Mammary epithelial cell (primary cell): ENCODE measurements at regions of chr17 and their contacts with region 1.

Region 1: GRCh38 chr17:66165513-66166123 is 26.3 kb downstream of the CEP112 start:
- DNase-seq: peak; percentile 33
- H3K4me3 ChIP-seq: no peak overlapping the region
- H3K27ac ChIP-seq: no peak overlapping the region
- H3K4me1 ChIP-seq: no peaks in the 10 kb centered on the region
- H3K27me3 ChIP-seq: no peaks in the 10 kb centered on the region
- CTCF ChIP-seq: peak; percentile 62 to 64

Region 2: GRCh38 chr17:65556014-65556909 is 609.4 kb before region 1 on chr17:
- CTCF ChIA-PET with region 1: no interaction called
- dilution Hi-C with region 1: no loop called
- in situ Hi-C with region 1: no loop called
- intact Hi-C with region 1: loop called (anchors 5 kb)
- DNase-seq: peak; percentile 24
- H3K4me3 ChIP-seq: no peak overlapping the region
- H3K27ac ChIP-seq: no peak overlapping the region
- H3K4me1 ChIP-seq: peaks cover 10% of the 10 kb centered on the region
- H3K27me3 ChIP-seq: peaks cover 21% of the 10 kb centered on the region
- CTCF ChIP-seq: peak; percentile 67

Region 3: DNA sequence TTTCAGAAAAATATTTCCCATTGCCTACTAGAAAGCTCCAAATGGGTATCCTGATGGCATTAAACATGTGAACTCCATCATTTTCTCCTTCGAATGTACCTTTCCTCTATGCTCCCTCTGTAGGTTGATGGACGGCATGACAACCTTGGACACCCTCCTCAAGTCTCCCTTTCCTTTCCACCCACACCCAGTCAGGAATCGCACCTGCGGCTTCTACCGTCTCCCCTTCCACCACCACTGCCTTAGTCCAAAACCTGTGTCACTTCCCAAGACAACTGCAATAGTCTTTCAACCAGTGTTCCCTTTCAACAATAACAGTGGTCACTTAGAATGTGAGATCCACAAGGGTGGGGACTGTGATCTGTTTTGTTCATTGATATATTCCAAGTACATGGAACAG is 371.0 kb before region 1 on chr17:
- CTCF ChIA-PET with region 1: no interaction called
- dilution Hi-C with region 1: no loop called
- in situ Hi-C with region 1: no loop called
- intact Hi-C with region 1: loop called (anchors 5 kb)
- DNase-seq: peak; percentile 29
- H3K4me3 ChIP-seq: no peak overlapping the region
- H3K27ac ChIP-seq: no peak overlapping the region
- H3K4me1 ChIP-seq: no peaks in the 10 kb centered on the region
- H3K27me3 ChIP-seq: no peaks in the 10 kb centered on the region
- CTCF ChIP-seq: peak; percentile 46 to 75

Region 4: GRCh38 chr17:66190738-66191592 is 25.3 kb after region 1 on chr17:
- CTCF ChIA-PET with region 1: no interaction called
- dilution Hi-C with region 1: no loop called
- in situ Hi-C with region 1: no loop called
- intact Hi-C with region 1: no loop called
- DNase-seq: peak; percentile 59
- H3K4me3 ChIP-seq: peak overlapping the region; percentile 49 to 68 (median 62)
- H3K27ac ChIP-seq: peak overlapping the region; percentile 52
- H3K4me1 ChIP-seq: peaks cover 11% of the 10 kb centered on the region
- H3K27me3 ChIP-seq: no peaks in the 10 kb centered on the region
- CTCF ChIP-seq: no peak